ENCODE measurements at regions of chr16 and their contacts with region 1.

Region 1: DNA sequence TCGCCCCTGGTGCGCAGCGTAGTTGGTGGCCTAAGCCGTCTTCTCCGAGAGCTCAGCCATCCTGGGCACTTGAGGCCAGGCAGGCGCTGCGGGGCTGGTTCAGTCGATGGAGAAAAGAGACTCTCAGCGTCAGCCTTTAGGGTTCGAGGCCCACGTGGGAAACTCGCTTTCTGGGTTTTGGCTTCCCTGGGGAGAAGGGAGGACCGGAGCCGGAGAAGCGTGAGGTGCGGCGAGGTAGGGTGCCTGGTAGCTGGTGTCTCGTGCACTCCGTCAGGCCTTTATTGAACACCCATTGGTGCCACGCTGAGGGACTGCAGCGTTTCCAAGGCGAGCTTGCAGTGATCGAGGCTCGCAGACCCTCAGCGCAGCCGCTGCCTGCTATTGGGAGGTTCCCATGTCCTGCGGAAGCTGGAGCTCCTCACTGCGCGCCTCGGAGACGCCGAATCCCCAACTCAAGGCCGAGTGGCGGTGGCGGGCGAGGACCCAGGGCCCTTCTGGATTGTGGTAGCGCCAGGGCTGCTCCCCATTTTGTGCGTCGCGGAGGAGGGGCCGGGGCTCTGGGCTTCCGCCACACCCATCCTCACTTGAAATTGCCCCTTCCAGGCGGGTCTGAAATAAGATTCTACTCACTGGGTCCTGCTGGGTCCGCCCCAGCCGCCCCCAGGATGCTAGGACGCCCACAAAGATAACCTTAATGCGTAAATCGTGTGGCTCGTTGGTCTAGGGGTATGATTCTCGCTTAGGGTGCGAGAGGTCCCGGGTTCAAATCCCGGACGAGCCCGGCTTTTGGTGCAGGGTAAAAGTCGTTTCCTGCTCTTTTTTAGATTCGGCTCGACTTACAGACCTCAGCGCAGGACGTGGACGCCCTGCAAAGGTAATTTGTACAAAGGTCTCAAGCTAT is 1.2 kb downstream of the OR1F1 start:
- DNase-seq: no peak
- ATAC-seq: peak; percentile 77
- H3K4me3 ChIP-seq: peak overlapping the region; percentile 54
- H3K27ac ChIP-seq: no peak overlapping the region
- H3K4me1 ChIP-seq: peaks cover 17% of the 10 kb centered on the region
- H3K27me3 ChIP-seq: no peaks in the 10 kb centered on the region; a peak in 1 of 4 replicates
- CTCF ChIP-seq: no peak
- EP300 ChIP-seq: no peak
- POLR2A ChIP-seq: peak; percentile 42; the same call in 1 of the 2 replicates
- RAD21 ChIP-seq: no peak

Region 2: DNA sequence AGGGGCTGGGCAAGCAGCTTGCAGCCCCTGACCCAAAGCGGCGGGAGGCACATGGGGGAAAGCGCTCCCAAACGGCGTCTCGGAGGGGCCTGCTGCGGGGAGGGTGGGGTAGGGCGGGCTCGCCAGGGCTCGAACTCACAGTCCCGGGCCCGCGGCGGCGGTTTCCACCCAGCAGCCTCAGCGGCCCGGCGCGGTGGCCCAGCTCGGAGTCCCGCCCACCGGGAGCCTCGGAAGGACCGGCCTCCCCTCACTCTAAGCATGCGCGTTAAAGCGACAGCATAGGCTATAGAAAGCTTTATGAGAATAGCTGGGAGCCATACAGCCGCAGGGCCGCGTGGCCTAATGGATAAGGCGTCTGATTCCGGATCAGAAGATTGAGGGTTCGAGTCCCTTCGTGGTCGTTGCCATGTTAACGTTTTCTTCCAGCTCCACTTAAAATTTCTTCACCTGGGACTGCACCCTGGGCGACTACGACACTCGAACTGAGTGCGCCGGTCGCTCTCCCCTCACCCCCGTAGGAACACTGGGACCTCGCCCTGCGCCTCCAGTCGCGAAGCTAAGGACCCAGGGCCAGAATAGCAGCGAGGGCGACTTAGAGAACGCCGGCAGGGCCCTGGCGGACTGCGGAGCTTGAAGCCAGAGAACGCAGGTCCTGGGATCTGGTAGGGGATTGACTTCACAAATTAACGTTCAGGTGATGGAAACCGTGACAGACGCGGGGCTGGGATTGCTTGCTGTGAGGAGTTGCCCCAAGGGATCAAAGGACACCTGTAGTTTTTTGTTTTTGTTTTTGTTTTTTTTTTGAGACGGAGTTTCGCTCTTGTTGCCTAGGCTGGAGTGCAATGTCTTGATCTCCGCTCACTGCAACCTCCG is 38.6 kb before region 1 on chr16:
- CTCF ChIA-PET with region 1: interaction called, 3 read pairs
- POLR2A ChIA-PET with region 1: no interaction called
- RAD21 ChIA-PET with region 1: no interaction called
- SMC1A ChIA-PET with region 1: no interaction called
- in situ Hi-C with region 1: no loop called
- intact Hi-C with region 1: loop called (anchors 2 kb)
- DNase-seq: peak; percentile 95
- ATAC-seq: peak; percentile 91
- H3K4me3 ChIP-seq: peak overlapping the region; percentile 94
- H3K27ac ChIP-seq: peak overlapping the region; percentile 70
- H3K4me1 ChIP-seq: peaks cover 3% of the 10 kb centered on the region; the same call in 1 of the 2 replicates
- H3K27me3 ChIP-seq: no peaks in the 10 kb centered on the region
- CTCF ChIP-seq: no peak
- EP300 ChIP-seq: peak in 1 of 2 experiments; percentile 65; a peak in 1 of 4 replicates
- POLR2A ChIP-seq: no peak
- RAD21 ChIP-seq: no peak

Region 3: DNA sequence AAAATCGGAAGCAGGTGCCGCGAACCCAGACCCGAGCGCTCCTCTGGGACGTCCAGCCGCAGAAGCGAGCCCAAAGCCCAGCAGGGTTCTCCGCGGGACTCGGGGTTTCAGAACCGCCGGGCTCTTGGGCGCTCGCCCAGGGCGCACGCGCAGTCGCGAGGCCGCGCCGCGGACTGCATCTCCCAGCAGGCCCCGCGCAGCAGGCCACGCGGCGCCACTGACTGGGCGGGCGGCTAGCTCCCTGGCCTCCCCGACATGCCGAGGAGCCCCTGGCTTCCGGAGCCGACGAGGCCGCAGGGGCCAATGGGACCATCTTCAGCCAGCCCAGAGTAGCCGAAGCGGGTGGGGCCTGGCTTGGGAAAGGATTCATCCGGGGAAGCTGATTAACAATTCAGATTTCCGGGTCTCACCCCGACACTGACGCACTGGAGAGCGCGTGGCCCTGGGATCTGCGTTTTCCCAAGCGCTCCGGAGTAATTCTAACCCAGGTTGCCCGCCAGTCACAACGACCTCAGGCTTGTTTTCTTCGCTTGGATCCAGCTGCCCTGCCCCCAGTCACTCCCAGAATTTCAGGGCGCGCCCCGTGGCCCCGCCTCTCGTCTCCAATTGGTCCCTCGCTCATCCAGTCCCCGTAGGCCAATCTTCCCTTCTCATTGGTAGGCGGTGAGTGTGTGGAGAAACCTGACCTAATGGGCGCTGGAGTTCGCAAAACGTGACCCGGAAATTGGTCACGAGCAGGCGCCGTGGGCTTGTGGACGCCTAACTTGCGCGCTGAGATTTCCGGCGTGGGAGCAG is 93.8 kb after region 1 on chr16 and contains the start of gene ZNF263:
- CTCF ChIA-PET with region 1: no interaction called
- POLR2A ChIA-PET with region 1: no interaction called
- RAD21 ChIA-PET with region 1: no interaction called
- SMC1A ChIA-PET with region 1: no interaction called
- in situ Hi-C with region 1: no loop called
- intact Hi-C with region 1: loop called (anchors 5 kb)
- DNase-seq: peak; percentile 88
- ATAC-seq: peak; percentile 95
- H3K4me3 ChIP-seq: peak within 1 kb of the TSS; percentile 91
- H3K27ac ChIP-seq: peak within 1 kb of the TSS; percentile 98
- H3K4me1 ChIP-seq: peaks cover 10% of the 10 kb centered on the region; the same call in 1 of the 2 replicates
- H3K27me3 ChIP-seq: no peaks in the 10 kb centered on the region
- CTCF ChIP-seq: no peak
- EP300 ChIP-seq: no peak; a peak in 1 of 4 replicates
- POLR2A ChIP-seq: peak; percentile 71
- RAD21 ChIP-seq: no peak
- polyA plus RNA-seq, gene ZNF263: 4.7 to 5.3 TPM